ENCODE measurements at regions of chr6 and their contacts with region 1.

Region 1: DNA sequence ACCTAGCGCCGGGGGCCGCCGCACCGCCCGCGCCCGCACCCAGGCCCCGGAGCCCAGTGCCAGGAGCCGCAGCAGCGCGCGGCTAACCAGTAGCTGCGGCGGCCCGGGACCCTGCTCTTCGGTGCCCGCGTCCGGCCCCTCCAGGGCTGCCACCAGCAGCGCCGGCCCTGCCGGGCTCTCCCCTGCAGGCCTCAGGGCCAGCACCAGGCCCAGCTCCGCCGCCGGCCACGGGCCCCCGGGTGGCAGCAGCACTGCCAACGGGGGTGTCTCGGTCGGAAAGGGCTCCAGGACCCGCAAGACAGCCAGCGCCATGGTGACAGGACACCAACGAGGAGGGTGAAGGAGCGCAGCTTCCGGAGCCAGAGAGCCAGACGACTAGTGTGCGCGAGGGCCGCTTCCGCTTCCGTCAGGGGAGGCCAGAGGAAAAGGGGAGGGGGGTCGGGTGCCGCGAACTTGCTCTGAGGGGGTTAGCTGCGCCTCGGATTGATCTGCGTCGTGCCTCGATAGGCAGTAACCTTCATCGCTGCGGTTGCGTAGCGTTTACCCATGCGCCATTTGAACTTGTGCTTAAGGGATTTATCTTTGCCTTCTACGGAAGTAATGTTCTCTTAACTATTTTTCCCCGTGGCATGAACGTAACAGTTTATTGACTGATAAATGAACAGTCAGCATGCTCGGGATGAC is at the start of gene PEX6:
- DNase-seq: peak; percentile 83
- H3K4me3 ChIP-seq: peak within 1 kb of the TSS; percentile 62 to 74 (median 72)
- H3K27ac ChIP-seq: peak within 1 kb of the TSS; percentile 58
- H3K4me1 ChIP-seq: peaks cover 28% of the 10 kb centered on the region
- H3K27me3 ChIP-seq: no peaks in the 10 kb centered on the region
- CTCF ChIP-seq: no peak
- POLR2A ChIP-seq: peak; percentile 83
- total RNA-seq, gene PEX6: 9.9 and 18.1 TPM in 2 replicates

Region 2: GRCh38 chr6:42963855-42964605 is 15.0 kb before region 1 on chr6:
- CTCF ChIA-PET with region 1: interaction called, 12 read pairs
- POLR2A ChIA-PET with region 1: no interaction called
- dilution Hi-C with region 1: no loop called
- intact Hi-C with region 1: loop called (anchors 2 kb)
- DNase-seq: peak; percentile 50
- H3K4me3 ChIP-seq: no peak overlapping the region
- H3K27ac ChIP-seq: no peak overlapping the region
- H3K4me1 ChIP-seq: peaks cover 10% of the 10 kb centered on the region
- H3K27me3 ChIP-seq: no peaks in the 10 kb centered on the region
- CTCF ChIP-seq: peak; percentile 8 to 31
- POLR2A ChIP-seq: no peak